Activated CD4-positive, alpha-beta memory T cell treated with anti-CD3 and anti-CD28 coated beads for 36 hours (primary cell): ENCODE measurements at regions of chr12 and their contacts with region 1.

Region 1: GRCh38 chr12:89040146-89040964 is 311.9 kb downstream of the DUSP6 start:
- DNase-seq: peak; percentile 93
- H3K4me3 Mint-ChIP-seq: peak overlapping the region; percentile 18
- H3K27ac Mint-ChIP-seq: peak overlapping the region; percentile 98
- H3K4me1 Mint-ChIP-seq: peaks cover 57% of the 10 kb centered on the region
- H3K27me3 Mint-ChIP-seq: peaks cover 1% of the 10 kb centered on the region

Region 2: DNA sequence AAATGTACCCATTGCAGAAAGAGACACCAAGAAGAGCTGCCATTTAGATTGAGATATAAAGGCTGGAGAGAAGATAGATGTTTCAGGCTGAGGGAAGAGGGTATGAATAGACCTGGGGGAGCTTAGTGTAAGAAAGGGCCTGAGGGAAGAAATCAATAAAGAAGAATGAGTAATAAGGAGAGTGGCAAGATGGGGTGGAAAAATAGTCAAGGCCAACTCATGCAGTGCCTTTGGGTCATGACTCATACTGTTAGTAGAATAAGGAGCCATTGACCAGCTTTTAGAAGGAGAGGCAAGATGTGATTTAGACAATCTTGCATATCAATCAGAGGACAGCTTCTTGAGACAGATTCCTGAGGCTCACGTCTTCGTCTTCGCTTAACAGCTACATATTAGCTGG is 24.4 kb after region 1 on chr12:
- CTCF ChIA-PET with region 1: interaction called, 4 read pairs
- POLR2A ChIA-PET with region 1: interaction called, 14 read pairs
- intact Hi-C with region 1: loop called (anchors 2 kb)
- DNase-seq: peak; percentile 23
- H3K4me3 Mint-ChIP-seq: no peak overlapping the region
- H3K27ac Mint-ChIP-seq: no peak overlapping the region
- H3K4me1 Mint-ChIP-seq: peaks cover 35% of the 10 kb centered on the region
- H3K27me3 Mint-ChIP-seq: no peaks in the 10 kb centered on the region

Region 3: DNA sequence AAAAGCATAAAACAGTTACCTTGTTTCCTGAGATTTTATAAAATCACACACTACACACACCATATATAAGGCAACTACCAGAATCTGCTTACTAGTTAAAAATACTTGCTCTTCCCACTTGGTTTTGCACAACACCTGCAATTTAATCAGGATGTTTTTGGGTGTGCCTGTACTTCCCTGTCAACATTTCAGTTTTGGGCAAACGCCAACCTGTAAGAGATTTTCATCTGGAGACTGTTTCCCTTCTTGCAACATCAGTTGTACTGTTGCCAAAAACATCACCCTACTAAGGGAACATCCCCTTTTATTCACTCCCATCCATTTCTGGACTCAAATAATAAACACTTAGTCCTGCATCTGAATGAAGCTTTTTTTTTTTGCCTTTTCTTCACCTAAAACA is 139.6 kb after region 1 on chr12:
- CTCF ChIA-PET with region 1: no interaction called
- POLR2A ChIA-PET with region 1: interaction called, 8 read pairs
- intact Hi-C with region 1: loop called (anchors 1 kb)
- DNase-seq: no peak
- H3K4me3 Mint-ChIP-seq: no peak overlapping the region
- H3K27ac Mint-ChIP-seq: peak overlapping the region; percentile 74
- H3K4me1 Mint-ChIP-seq: peaks cover 35% of the 10 kb centered on the region
- H3K27me3 Mint-ChIP-seq: no peaks in the 10 kb centered on the region

Region 4: DNA sequence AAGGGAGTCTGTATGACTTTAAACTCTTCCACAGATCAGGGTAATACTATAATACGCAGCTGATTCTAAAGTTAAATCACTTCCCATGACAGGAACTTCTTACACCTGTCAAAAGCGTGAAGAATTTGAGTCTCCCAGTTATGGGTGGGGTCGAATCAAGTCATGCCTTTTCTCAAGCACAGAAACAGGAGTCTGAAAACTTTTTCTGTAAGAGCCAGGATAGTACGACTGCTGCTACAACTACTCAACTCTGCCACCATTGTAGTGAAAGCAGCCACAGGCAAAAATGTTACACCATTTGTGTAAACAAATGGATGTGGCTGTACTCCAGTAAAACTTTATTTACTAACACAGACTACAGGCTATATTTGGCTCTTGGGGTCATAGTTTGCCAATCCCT is 221.6 kb after region 1 on chr12:
- CTCF ChIA-PET with region 1: interaction called, 3 read pairs
- POLR2A ChIA-PET with region 1: interaction called, 10 read pairs
- intact Hi-C with region 1: no loop called
- DNase-seq: no peak
- H3K4me3 Mint-ChIP-seq: no peak overlapping the region
- H3K27ac Mint-ChIP-seq: no peak overlapping the region
- H3K4me1 Mint-ChIP-seq: peaks cover 15% of the 10 kb centered on the region
- H3K27me3 Mint-ChIP-seq: no peaks in the 10 kb centered on the region

Region 5: GRCh38 chr12:89494411-89495231 is 454.3 kb after region 1 on chr12:
- CTCF ChIA-PET with region 1: no interaction called
- POLR2A ChIA-PET with region 1: interaction called, 7 read pairs
- intact Hi-C with region 1: loop called (anchors 1 kb)
- DNase-seq: peak; percentile 71
- H3K4me3 Mint-ChIP-seq: peak overlapping the region; percentile 36
- H3K27ac Mint-ChIP-seq: peak overlapping the region; percentile 99
- H3K4me1 Mint-ChIP-seq: peaks cover 30% of the 10 kb centered on the region
- H3K27me3 Mint-ChIP-seq: no peaks in the 10 kb centered on the region